ENCODE measurements at regions of chr14 and their contacts with region 1.

Region 1: GRCh38 chr14:88189417-88190191 is 133.5 kb downstream of the KCNK10 start:
- DNase-seq: peak; percentile 68
- ATAC-seq: peak; percentile 67
- H3K4me3 ChIP-seq: peak overlapping the region in 2 of 5 experiments; percentile 27 to 28
- H3K4me3 Mint-ChIP-seq: peak overlapping the region; percentile 80
- H3K27ac ChIP-seq: no peak overlapping the region
- H3K27ac Mint-ChIP-seq: no peak overlapping the region
- H3K4me1 ChIP-seq: peaks cover 0 to 6% of the 10 kb centered on the region in 2 donors
- H3K4me1 Mint-ChIP-seq: peaks cover 6% of the 10 kb centered on the region
- H3K27me3 ChIP-seq: peaks cover 0 to 7% (median 2%) of the 10 kb centered on the region in 4 experiments
- H3K27me3 Mint-ChIP-seq: peaks cover 21% of the 10 kb centered on the region
- CTCF ChIP-seq: peak; percentile 76

Region 2: DNA sequence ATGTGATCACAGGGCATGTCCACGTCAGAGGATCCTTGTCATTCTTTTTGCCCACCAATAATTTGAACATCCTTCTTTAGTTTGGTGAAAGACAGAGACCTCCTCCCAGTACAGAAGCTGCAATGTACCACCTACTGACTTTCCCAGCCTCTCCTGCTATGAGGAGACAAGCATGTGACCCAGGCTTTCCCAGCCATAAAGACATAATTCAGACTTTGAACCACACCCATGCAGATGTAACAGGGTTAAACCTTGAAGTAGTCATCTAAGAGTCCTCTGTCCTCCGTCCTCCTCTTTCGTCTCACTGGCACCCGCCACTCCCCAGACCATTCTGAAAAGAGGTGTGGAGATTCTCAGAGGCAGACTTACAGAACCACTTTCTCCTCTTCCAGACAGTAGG is 12.7 kb after region 1 on chr14:
- CTCF ChIA-PET with region 1: interaction called, 15 read pairs
- POLR2A ChIA-PET with region 1: no interaction called
- intact Hi-C with region 1: no loop called
- DNase-seq: no peak
- ATAC-seq: no peak
- H3K4me3 ChIP-seq: no peak overlapping the region
- H3K4me3 Mint-ChIP-seq: no peak overlapping the region
- H3K27ac ChIP-seq: no peak overlapping the region
- H3K27ac Mint-ChIP-seq: no peak overlapping the region
- H3K4me1 ChIP-seq: no peaks in the 10 kb centered on the region
- H3K4me1 Mint-ChIP-seq: peaks cover 2% of the 10 kb centered on the region
- H3K27me3 ChIP-seq: peaks cover 0 to 4% (median 2%) of the 10 kb centered on the region in 4 experiments
- H3K27me3 Mint-ChIP-seq: peaks cover 13% of the 10 kb centered on the region
- CTCF ChIP-seq: no peak

Region 3: GRCh38 chr14:88228522-88229236 is 39.1 kb after region 1 on chr14:
- CTCF ChIA-PET with region 1: interaction called, 87 read pairs
- POLR2A ChIA-PET with region 1: no interaction called
- intact Hi-C with region 1: no loop called
- DNase-seq: no peak
- ATAC-seq: no peak
- H3K4me3 ChIP-seq: no peak overlapping the region
- H3K4me3 Mint-ChIP-seq: no peak overlapping the region
- H3K27ac ChIP-seq: no peak overlapping the region
- H3K27ac Mint-ChIP-seq: no peak overlapping the region
- H3K4me1 ChIP-seq: no peaks in the 10 kb centered on the region
- H3K4me1 Mint-ChIP-seq: no peaks in the 10 kb centered on the region
- H3K27me3 ChIP-seq: no peaks in the 10 kb centered on the region
- H3K27me3 Mint-ChIP-seq: peaks cover 16% of the 10 kb centered on the region
- CTCF ChIP-seq: no peak

Region 4: DNA sequence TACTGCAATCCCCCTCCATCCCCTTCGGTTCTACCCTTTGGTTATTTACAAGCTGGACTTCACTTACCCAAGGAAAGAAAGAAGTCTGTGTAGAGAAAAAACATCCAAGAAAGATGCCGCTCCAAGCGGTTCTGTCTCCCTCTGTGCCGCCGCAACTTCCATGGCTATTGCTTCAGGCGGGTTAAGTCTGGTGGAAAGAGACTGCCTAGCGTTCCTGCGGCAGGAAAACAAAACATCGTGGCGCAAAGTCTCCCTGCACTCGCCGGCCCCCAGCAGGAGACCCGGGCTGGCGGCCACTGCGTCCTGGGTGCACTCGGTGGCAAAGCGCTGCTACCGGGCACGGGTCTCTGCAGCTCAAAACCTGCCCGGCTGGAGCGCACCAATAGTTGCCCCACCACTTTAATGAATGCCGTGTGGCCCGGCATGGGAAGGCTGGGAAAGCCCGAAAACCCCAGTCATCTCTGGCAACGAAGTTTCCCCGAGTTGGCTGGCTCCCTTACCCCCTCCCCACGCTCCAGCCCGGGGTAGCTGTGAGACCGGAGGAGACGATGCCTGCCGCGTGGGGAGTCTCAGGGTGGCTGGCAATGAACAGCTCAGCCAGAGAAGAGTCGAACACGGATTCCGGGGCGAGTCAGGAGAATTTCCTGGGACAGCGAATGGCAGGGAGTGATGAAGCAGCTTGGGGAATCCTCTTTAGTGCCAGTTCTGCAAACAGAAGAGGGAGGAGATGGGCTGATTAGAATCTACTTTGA is 136.9 kb after region 1 on chr14:
- CTCF ChIA-PET with region 1: no interaction called
- POLR2A ChIA-PET with region 1: no interaction called
- intact Hi-C with region 1: loop called (anchors 5 kb)
- DNase-seq: no peak
- ATAC-seq: no peak
- H3K4me3 ChIP-seq: no peak overlapping the region
- H3K4me3 Mint-ChIP-seq: no peak overlapping the region
- H3K27ac ChIP-seq: no peak overlapping the region
- H3K27ac Mint-ChIP-seq: no peak overlapping the region
- H3K4me1 ChIP-seq: peaks cover 15 to 17% of the 10 kb centered on the region in 2 donors
- H3K4me1 Mint-ChIP-seq: peaks cover 8% of the 10 kb centered on the region
- H3K27me3 ChIP-seq: peaks cover 0 to 56% (median 36%) of the 10 kb centered on the region in 4 experiments
- H3K27me3 Mint-ChIP-seq: peaks cover 63% of the 10 kb centered on the region
- CTCF ChIP-seq: no peak

Region 5: GRCh38 chr14:88426271-88426670 is 236.7 kb after region 1 on chr14:
- CTCF ChIA-PET with region 1: no interaction called
- POLR2A ChIA-PET with region 1: no interaction called
- intact Hi-C with region 1: no loop called
- DNase-seq: no peak
- ATAC-seq: no peak
- H3K4me3 ChIP-seq: no peak overlapping the region
- H3K4me3 Mint-ChIP-seq: no peak overlapping the region
- H3K27ac ChIP-seq: no peak overlapping the region
- H3K27ac Mint-ChIP-seq: no peak overlapping the region
- H3K4me1 ChIP-seq: no peaks in the 10 kb centered on the region
- H3K4me1 Mint-ChIP-seq: no peaks in the 10 kb centered on the region
- H3K27me3 ChIP-seq: no peaks in the 10 kb centered on the region
- H3K27me3 Mint-ChIP-seq: no peaks in the 10 kb centered on the region
- CTCF ChIP-seq: no peak